ENCODE measurements at regions of chr2 and their contacts with region 1.

Region 1: DNA sequence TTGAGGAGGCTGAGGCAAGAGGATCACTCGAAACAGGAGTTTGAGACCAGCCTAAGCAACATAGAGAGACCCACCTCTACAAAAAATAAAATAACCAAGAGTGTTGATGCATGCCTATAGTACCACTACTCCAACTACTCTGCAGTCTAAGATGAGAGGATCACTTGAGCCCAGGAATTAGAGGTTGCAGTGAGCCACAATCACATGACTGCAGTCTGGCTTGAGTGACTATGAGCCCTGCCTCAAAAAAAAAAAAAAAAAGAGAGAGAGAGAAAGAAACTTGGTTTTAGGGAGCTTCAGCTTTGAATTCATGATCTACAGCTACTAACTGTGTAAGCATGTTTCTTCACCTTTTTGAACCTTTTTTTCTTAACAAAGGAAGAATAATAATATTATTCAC is 119.9 kb downstream of the HNMT start:
- DNase-seq: no peak
- H3K4me3 ChIP-seq: no peak overlapping the region
- H3K27ac ChIP-seq: no peak overlapping the region
- H3K4me1 ChIP-seq: peaks cover 22% of the 10 kb centered on the region
- H3K27me3 ChIP-seq: no peaks in the 10 kb centered on the region
- CTCF ChIP-seq: no peak

Region 2: GRCh38 chr2:137847443-137847842 is 236.8 kb before region 1 on chr2:
- CTCF ChIA-PET with region 1: no interaction called
- dilution Hi-C with region 1: no loop called
- in situ Hi-C with region 1: no loop called
- intact Hi-C with region 1: no loop called
- DNase-seq: peak; percentile 44
- H3K4me3 ChIP-seq: no peak overlapping the region
- H3K27ac ChIP-seq: no peak overlapping the region
- H3K4me1 ChIP-seq: peaks cover 3% of the 10 kb centered on the region
- H3K27me3 ChIP-seq: no peaks in the 10 kb centered on the region
- CTCF ChIP-seq: no peak

Region 3: DNA sequence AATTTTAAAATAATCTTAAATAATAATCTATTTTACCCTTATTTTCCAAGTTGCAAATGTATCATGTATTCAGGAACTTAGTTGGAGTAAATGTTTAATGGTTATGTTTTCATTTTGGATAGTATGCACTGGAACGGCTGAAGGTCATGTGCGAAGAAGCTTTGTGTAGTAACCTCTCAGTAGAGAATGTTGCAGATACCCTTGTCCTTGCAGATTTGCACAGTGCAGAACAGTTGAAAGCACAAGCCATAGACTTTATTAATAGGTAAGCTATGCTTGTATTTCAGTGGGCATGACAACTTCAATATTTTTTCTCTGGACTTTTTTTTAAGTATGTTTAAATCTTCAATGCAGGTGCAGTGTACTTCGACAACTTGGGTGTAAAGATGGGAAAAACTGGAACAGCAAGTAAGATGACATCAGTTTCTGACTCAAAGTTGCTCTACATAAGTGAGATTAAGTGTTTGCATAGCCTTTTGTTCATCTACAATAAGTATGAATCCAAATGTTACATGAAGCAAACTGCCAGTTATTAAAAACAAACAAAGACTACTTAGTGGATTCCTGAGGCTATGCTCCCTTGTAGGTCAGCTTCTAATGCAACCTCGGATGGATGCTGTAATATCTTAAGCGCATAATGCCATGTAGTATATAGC is 480.5 kb after region 1 on chr2:
- CTCF ChIA-PET with region 1: interaction called, 11 read pairs
- dilution Hi-C with region 1: no loop called
- in situ Hi-C with region 1: no loop called
- intact Hi-C with region 1: no loop called
- DNase-seq: peak; percentile 31
- H3K4me3 ChIP-seq: no peak overlapping the region
- H3K27ac ChIP-seq: no peak overlapping the region
- H3K4me1 ChIP-seq: no peaks in the 10 kb centered on the region
- H3K27me3 ChIP-seq: no peaks in the 10 kb centered on the region
- CTCF ChIP-seq: no peak

Region 4: GRCh38 chr2:138610216-138610953 is 526.2 kb after region 1 on chr2:
- CTCF ChIA-PET with region 1: no interaction called
- dilution Hi-C with region 1: no loop called
- in situ Hi-C with region 1: no loop called
- intact Hi-C with region 1: no loop called
- DNase-seq: no peak
- H3K4me3 ChIP-seq: no peak overlapping the region
- H3K27ac ChIP-seq: no peak overlapping the region
- H3K4me1 ChIP-seq: peaks cover 8% of the 10 kb centered on the region
- H3K27me3 ChIP-seq: no peaks in the 10 kb centered on the region
- CTCF ChIP-seq: no peak

Measured in mammary epithelial cell (primary cell).